ENCODE measurements at regions of chr11 and their contacts with region 1.

Region 1: GRCh38 chr11:64894070-64894796 is 15.8 kb upstream of the EHD1 start:
- DNase-seq: peak; percentile 97
- H3K4me3 ChIP-seq: no peak overlapping the region
- H3K27ac ChIP-seq: no peak overlapping the region
- H3K4me1 ChIP-seq: peaks cover 0 to 3% of the 10 kb centered on the region in 2 experiments; a peak in 1 of 4 replicates
- H3K27me3 ChIP-seq: no peaks in the 10 kb centered on the region
- CTCF ChIP-seq: peak; percentile 88
- EP300 ChIP-seq: no peak
- RAD21 ChIP-seq: peak; percentile 75

Region 2: GRCh38 chr11:64545605-64546004 is 348.6 kb before region 1 on chr11:
- CTCF ChIA-PET with region 1: no interaction called
- POLR2A ChIA-PET with region 1: no interaction called
- DNase-seq: no peak
- H3K4me3 ChIP-seq: no peak overlapping the region
- H3K27ac ChIP-seq: no peak overlapping the region
- H3K4me1 ChIP-seq: no peaks in the 10 kb centered on the region
- H3K27me3 ChIP-seq: no peaks in the 10 kb centered on the region; the same call in 1 of the 2 replicates
- CTCF ChIP-seq: no peak
- EP300 ChIP-seq: no peak
- RAD21 ChIP-seq: no peak

Region 3: DNA sequence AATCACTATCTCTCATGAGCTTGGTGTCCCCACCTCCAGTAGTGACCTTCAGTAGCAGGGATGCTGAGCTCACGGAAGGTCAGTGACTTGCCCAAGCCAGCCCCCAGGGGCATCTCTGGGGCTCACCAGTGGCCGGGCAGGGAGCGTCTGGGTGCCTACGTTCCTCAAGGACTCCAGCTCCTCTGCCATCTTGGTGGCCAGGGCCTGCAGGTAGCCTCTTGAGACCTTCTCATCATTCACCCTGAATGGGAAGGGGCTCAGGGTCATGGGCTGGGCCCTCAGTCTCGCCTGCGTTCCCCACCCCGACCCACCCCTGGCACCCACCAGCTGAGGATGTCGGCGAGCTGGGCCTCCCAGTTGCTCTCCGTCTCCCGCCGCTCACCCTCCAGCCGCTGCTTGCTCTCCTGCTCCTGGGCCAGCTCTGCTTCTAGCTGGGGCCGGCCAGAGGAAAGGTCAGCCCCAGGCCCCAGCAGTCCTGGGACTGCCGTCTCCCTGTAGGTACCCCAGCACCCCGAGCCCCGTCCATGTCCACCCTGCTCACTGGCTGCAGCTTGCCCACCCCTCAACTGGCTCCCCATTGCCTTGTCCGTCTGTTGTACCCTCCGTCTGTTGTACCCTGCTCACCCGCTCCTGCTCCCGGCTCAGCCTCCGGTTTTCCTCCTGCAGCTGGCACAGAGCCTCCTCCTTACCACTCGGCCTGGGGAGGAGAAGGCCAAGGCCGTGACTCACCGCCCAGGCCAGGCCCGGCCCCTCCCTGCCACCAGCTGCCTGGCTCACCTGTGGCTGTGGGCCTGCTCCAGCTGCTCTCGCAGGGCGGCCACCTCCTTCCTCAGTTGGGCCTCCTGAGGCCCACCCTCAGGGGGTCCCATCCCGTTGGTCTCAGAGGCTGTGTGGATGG is 59.3 kb before region 1 on chr11:
- CTCF ChIA-PET with region 1: interaction called, 15 read pairs
- POLR2A ChIA-PET with region 1: no interaction called
- DNase-seq: no peak
- H3K4me3 ChIP-seq: no peak overlapping the region
- H3K27ac ChIP-seq: no peak overlapping the region
- H3K4me1 ChIP-seq: peaks cover 0 to 5% of the 10 kb centered on the region in 2 experiments; a peak in 1 of 4 replicates
- H3K27me3 ChIP-seq: no peaks in the 10 kb centered on the region
- CTCF ChIP-seq: no peak
- EP300 ChIP-seq: no peak
- RAD21 ChIP-seq: no peak

Region 4: GRCh38 chr11:64854534-64855429 is 39.5 kb before region 1 on chr11:
- CTCF ChIA-PET with region 1: interaction called, 530 read pairs
- POLR2A ChIA-PET with region 1: no interaction called
- DNase-seq: no peak
- H3K4me3 ChIP-seq: no peak overlapping the region
- H3K27ac ChIP-seq: peak overlapping the region; percentile 19 to 80; a peak in 3 of 4 replicates
- H3K4me1 ChIP-seq: peaks cover 11 to 28% of the 10 kb centered on the region in 2 experiments; a peak in 3 of 4 replicates
- H3K27me3 ChIP-seq: no peaks in the 10 kb centered on the region
- CTCF ChIP-seq: no peak
- EP300 ChIP-seq: peak in 1 of 2 experiments; percentile 96; a peak in 2 of 4 replicates
- RAD21 ChIP-seq: no peak

Region 5: GRCh38 chr11:64864473-64865285 is 29.6 kb before region 1 on chr11:
- CTCF ChIA-PET with region 1: interaction called, 17 read pairs
- POLR2A ChIA-PET with region 1: interaction called, 3 read pairs
- DNase-seq: no peak
- H3K4me3 ChIP-seq: no peak overlapping the region
- H3K27ac ChIP-seq: peak overlapping the region in 1 of 2 experiments; percentile 12; a peak in 1 of 4 replicates
- H3K4me1 ChIP-seq: peaks cover 6 to 11% of the 10 kb centered on the region in 2 experiments; a peak in 3 of 4 replicates
- H3K27me3 ChIP-seq: no peaks in the 10 kb centered on the region
- CTCF ChIP-seq: no peak
- EP300 ChIP-seq: no peak
- RAD21 ChIP-seq: no peak

Region 6: DNA sequence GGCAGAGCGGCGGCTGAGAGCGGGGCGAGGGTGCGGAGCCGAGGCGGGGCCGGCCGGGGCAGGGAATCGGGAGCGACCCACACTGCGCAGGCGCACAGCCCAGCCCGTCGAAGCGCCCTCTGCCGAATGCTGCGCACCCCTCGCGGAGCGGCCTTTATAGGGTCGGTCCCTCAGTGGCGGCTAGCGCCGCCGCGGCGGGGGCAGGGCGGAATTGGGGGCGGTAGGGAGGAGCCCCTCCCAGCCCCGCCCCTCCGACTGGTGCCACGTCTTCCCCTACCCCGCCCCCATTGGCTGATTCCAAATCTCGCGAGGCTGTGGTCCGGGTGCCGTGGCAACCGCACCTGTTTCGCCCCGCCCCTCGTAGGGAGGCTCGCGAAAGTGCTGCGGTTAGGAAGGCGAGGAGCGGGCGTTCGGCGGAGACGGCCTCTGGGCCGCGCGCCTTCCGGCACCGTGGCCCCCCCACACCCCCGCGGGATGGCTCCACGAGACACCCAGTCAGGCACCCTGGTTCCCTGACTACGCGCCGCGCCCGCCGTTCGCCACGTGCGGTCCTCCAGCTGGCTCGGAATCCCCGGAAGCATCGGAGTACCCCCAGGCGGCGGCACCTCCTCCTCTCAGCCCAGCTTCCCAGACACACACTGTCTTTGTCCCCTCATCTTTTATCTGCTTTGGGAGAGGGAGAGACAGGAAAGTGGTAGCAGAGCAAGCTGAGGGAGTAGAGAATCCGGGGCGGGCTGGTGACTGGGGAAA is 15.6 kb before region 1 on chr11 and contains the start of gene EHD1:
- CTCF ChIA-PET with region 1: interaction called, 32 read pairs
- POLR2A ChIA-PET with region 1: interaction called, 5 read pairs
- DNase-seq: peak; percentile 100
- H3K4me3 ChIP-seq: peak within 1 kb of the TSS; percentile 95 to 96
- H3K27ac ChIP-seq: peak within 1 kb of the TSS; percentile 76 to 77
- H3K4me1 ChIP-seq: peaks cover 6 to 32% of the 10 kb centered on the region in 2 experiments; a peak in 2 of 4 replicates
- H3K27me3 ChIP-seq: no peaks in the 10 kb centered on the region
- CTCF ChIP-seq: peak; percentile 49
- EP300 ChIP-seq: no peak
- RAD21 ChIP-seq: peak; percentile 42; the same call in 1 of the 2 replicates
- polyA plus RNA-seq, gene EHD1: 57.6 and 93.3 TPM in 2 replicates

Region 7: DNA sequence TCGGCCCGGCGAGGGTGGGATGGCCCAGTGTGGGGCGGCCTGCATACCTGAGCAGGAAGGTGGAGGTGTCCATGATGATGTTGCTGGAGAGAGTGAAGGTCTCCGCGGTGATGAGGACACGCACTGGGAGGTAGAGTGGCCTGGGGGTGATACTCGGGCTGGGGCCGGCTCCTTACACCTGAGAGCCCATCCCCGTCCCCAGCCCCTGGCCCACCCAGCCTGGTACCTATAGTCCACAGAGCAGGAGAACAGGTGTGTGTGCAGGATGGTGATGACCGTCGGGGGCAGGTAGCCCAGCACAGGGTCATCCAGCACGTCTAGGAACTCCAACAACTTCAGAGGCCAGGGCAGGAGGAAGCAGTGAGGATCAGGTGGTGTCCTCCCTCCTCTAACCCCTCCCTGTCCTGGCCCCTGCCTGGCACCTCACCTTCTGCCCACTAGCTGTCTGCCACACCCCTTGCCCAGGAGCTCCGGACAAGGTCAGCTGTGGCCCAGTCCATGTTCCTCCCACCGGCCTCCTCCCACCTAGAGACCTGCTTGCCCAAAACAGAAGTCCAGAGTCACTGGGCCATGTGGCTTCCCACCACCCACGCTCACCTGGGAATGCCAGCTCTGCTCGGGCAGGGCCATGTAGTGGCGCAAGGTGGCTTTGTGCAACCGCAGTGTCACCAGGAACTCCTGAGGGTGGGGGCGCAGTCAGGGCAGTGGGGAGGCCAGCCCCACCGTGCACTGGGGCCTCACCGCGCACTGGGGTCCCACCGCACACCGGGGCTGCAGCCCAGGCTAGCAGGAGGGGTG is 11.5 kb after region 1 on chr11:
- CTCF ChIA-PET with region 1: interaction called, 12 read pairs
- POLR2A ChIA-PET with region 1: no interaction called
- DNase-seq: no peak
- H3K4me3 ChIP-seq: no peak overlapping the region
- H3K27ac ChIP-seq: no peak overlapping the region
- H3K4me1 ChIP-seq: no peaks in the 10 kb centered on the region
- H3K27me3 ChIP-seq: no peaks in the 10 kb centered on the region
- CTCF ChIP-seq: no peak
- EP300 ChIP-seq: no peak
- RAD21 ChIP-seq: no peak

Region 8: DNA sequence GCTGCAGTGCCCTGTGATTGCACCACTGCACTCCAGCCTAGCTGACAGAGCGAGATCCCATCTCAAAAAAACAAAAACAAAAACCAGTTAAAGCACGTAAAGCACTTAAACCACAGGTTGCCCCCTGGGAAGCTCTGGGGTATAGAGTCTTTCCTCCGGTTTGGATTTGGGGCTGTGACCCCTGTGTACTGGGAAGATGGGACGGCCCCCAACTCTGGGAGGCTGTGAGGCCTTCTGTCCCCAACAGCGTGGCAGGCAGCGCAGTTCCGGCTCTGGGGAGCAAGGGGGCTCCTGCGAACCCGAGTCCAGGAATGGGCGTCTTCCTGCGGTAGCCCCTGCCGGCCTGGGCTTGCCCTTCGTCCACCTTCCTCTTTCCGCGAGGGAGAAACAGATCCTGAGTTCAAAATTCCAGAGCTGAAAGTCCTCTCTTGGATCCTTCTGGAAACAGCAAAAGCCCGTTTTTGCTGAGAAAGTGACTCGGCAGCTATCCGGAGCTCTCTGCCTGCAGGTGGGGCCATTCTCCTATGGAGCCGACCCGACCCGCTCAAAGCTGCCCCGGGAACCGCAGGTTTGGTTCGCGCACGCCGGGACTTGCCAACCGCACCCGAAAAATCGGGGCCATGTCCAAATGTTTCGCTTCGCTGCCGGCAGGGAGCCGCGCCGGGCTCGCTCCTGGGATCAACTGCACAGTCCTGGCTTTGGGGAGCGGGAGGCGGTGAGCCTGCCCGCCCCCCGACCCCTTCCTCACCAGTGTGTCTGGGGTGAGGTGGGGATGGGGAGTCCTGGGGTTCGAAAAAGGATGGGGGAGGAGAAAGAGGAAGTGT is 331.3 kb after region 1 on chr11:
- CTCF ChIA-PET with region 1: no interaction called
- POLR2A ChIA-PET with region 1: no interaction called
- DNase-seq: peak; percentile 87
- H3K4me3 ChIP-seq: peak overlapping the region; percentile 29 to 40; a peak in 3 of 4 replicates
- H3K27ac ChIP-seq: no peak overlapping the region
- H3K4me1 ChIP-seq: peaks cover 2 to 9% of the 10 kb centered on the region in 2 experiments; a peak in 2 of 4 replicates
- H3K27me3 ChIP-seq: no peaks in the 10 kb centered on the region
- CTCF ChIP-seq: peak; percentile 66
- EP300 ChIP-seq: no peak
- RAD21 ChIP-seq: peak; percentile 62

Measured in SK-N-SH (cell line).